ENCODE measurements at regions of chr3 and their contacts with region 1.

Region 1: GRCh38 chr3:9352917-9353752 is 9.7 kb upstream of the THUMPD3 start:
- DNase-seq: peak; percentile 64 to 76
- ATAC-seq: peak; percentile 86

Region 2: DNA sequence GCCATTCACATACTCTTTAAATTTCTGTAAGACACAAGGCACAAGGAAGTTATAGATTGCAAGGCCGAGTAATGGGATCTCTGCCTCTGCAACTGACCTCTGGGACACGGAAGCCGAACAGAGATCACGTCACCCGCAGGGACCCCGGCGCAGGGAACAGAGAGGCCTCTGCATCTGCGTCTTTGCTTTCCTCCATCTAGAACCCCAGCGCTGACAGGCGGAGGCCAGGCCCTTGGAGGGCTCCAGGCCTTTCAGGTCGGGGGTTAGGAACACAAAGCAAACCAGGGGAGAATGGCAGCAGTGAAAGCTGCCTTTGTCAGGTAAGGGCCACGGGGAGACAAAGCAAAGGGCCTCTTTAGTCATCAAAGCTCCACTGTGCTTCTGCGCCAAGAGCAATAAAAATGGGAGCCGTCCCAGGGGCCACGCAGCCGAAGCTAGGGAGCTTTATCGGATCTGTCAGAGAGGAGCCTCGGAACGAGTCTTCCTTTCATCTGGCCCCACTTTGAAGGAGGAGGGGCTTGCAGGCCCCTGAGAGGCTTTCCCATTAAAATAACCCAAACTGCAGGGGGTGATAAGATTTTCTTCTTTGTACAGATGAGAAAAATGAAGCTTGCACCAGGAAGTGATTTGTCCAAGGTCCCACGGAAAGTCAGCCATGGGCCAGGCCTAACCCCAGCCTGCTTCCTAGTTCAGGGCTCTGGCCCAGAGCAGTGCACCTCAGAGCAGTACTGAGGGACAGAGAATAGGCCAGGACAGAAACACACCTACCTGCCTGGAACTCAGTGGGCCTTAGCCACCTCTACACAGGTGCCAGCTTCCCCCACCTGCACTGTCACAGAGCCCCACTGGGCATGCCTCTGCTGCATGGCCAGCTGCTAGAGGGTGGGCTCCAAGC is 305.4 kb before region 1 on chr3:
- intact Hi-C with region 1: no loop called
- DNase-seq: peak in 1 of 2 donors; percentile 15
- ATAC-seq: peak; percentile 82

Region 3: GRCh38 chr3:9649791-9650521 is 296.8 kb after region 1 on chr3:
- intact Hi-C with region 1: loop called in 1 of 2 experiments (anchors 10 kb)
- DNase-seq: no peak
- ATAC-seq: peak; percentile 12